ENCODE measurements at regions of chr20 and their contacts with region 1.

Region 1: GRCh38 chr20:58309575-58310290 is at the start of gene RAB22A:
- DNase-seq: peak; percentile 91
- ATAC-seq: peak; percentile 58
- H3K4me3 ChIP-seq: peak within 1 kb of the TSS; percentile 68 to 89 (median 78)
- H3K4me3 Mint-ChIP-seq: peak within 1 kb of the TSS; percentile 91
- H3K27ac ChIP-seq: peak within 1 kb of the TSS; percentile 94 to 97
- H3K27ac Mint-ChIP-seq: peak within 1 kb of the TSS; percentile 96
- H3K4me1 ChIP-seq: peaks cover 47 to 54% of the 10 kb centered on the region in 2 donors
- H3K4me1 Mint-ChIP-seq: peaks cover 54% of the 10 kb centered on the region
- H3K27me3 ChIP-seq: no peaks in the 10 kb centered on the region
- H3K27me3 Mint-ChIP-seq: no peaks in the 10 kb centered on the region
- CTCF ChIP-seq: no peak
- total RNA-seq, gene RAB22A: 21.1 and 22.0 TPM in 2 replicates

Region 2: DNA sequence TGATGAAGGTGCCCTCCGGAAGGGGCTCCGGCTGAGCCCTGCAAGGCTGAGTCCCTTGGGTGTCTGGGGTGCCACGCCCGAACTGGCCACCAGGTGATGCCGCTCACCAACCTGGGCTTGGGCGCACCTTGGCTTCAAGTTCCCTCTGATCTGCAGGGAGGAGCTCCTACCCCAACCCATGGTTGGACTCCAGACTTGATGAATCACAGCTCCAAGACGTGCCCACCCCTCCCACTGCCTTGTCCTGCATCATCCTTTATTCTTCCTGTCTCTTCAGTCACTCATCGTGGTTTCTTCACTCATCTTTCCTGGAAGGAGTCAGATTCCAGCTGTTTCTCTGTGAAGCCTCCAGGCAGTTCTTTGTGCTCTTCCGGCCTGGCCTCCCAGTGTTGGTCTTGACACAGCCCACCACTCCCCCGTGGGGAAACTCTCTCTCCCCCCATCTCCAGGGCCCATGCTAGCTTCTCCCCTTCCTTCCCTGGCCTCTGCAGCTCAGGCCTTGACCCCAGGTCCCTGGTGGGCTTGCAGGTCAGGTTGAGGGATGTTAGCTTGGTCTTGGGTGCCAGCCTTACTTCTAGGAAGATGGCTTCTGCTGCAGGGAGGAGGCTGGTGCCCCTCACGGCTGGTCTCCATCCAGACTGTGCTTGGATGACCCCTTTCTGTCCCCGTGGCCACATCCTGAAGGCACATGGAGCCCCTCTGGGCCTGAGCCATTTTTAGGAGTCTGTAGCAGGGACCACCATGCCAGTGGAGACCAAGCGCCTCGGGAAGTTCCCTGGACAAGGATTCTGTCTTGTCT is 687.0 kb before region 1 on chr20:
- CTCF ChIA-PET with region 1: no interaction called
- POLR2A ChIA-PET with region 1: no interaction called
- intact Hi-C with region 1: loop called (anchors 2 kb)
- DNase-seq: peak; percentile 69
- ATAC-seq: no peak
- H3K4me3 ChIP-seq: no peak overlapping the region
- H3K4me3 Mint-ChIP-seq: peak overlapping the region; percentile 13
- H3K27ac ChIP-seq: no peak overlapping the region
- H3K27ac Mint-ChIP-seq: peak overlapping the region; percentile 80
- H3K4me1 ChIP-seq: peaks cover 54 to 59% of the 10 kb centered on the region in 2 donors
- H3K4me1 Mint-ChIP-seq: peaks cover 65% of the 10 kb centered on the region
- H3K27me3 ChIP-seq: no peaks in the 10 kb centered on the region
- H3K27me3 Mint-ChIP-seq: no peaks in the 10 kb centered on the region
- CTCF ChIP-seq: peak; percentile 82

Region 3: DNA sequence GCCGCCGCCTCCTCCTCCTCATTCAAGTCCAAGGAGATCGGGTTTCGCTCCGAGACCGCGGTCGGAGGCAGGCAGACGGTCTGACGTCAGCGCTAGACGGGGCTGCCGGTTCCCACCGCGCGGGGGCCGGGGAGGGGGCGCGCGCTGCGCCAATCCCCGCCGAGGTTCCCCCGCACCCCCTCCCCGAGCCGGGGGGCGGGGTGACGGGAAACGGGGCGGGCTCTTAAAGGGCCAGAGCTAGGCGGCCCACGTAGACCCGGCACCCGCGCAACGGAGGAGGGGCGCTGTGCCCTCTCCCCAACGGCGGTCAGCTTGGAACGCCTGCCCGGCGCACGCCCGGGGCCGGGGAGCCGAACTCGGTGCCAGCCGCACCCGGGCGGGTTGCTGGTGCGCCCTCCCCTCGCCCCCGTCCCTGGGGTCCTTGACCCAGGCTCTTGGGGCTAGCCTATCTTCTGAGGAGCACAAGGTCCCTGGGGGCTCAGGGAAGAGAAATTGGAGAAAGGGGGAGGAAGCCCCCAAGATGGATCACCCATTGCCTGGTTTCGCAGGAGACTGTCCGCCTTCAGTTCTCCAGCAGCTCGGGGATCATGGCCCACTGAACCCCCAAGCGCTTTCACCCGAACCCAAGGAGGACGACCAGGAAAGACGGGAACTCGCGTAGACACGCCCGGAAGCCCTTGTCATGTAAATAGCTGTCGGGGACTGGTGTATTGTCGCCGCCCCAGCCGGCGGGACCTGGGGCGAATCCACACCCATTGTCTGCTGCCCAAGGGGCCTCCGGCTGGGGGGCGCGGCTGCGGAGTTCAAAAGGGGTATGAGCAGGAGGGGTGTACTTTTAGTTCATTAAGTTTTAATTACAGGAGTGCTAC is 599.6 kb before region 1 on chr20 and contains the start of gene PMEPA1:
- CTCF ChIA-PET with region 1: no interaction called
- POLR2A ChIA-PET with region 1: no interaction called
- intact Hi-C with region 1: loop called (anchors 2 kb)
- DNase-seq: peak; percentile 97
- ATAC-seq: peak; percentile 86
- H3K4me3 ChIP-seq: peak within 1 kb of the TSS; percentile 59 to 96 (median 83)
- H3K4me3 Mint-ChIP-seq: peak within 1 kb of the TSS; percentile 99
- H3K27ac ChIP-seq: peak within 1 kb of the TSS; percentile 80 to 99
- H3K27ac Mint-ChIP-seq: peak within 1 kb of the TSS; percentile 92
- H3K4me1 ChIP-seq: peaks cover 49 to 55% of the 10 kb centered on the region in 2 donors
- H3K4me1 Mint-ChIP-seq: peaks cover 53% of the 10 kb centered on the region
- H3K27me3 ChIP-seq: no peaks in the 10 kb centered on the region
- H3K27me3 Mint-ChIP-seq: no peaks in the 10 kb centered on the region
- CTCF ChIP-seq: no peak
- total RNA-seq, gene PMEPA1: 37.4 and 38.7 TPM in 2 replicates

Region 4: DNA sequence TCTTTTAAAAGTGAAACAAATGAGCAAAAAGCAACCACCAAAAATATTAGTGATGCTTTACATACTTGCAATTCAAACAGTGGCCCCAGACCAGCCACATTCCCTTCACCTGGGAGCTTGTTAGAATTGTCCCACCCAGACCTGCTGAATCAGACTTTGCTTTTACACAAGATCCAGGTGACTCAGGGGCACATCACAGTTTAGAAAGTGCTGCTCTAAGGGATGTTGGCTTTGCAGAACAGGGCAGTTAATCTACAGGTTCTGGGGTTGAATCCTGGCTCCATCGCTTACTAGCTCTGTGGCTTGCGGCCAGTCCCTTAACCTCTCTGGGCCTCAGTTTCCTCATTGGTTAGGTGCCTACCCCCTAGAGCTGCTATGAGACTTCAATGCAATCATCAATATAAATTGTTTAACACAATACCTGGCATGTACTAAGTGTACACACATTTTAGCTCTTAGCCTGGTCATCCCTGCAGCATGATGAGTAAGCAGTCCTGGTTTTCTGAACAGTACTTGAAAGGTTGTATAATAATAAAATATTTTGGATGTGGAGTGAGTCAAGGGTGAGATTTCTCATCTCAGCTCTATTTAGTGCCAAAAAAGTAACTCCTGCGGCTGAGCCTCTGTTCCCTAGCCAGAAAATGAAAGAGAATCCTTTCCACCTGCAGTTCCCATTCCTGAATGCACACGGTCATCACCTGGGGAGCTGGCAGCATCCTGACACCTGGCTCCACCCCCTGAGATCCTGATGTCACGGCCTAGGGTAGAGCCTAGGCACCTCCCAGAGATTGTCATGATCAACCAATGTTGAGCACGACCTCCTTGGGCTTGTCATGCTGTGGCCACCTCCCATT is 244.0 kb before region 1 on chr20:
- CTCF ChIA-PET with region 1: no interaction called
- POLR2A ChIA-PET with region 1: no interaction called
- intact Hi-C with region 1: no loop called
- DNase-seq: no peak
- ATAC-seq: no peak
- H3K4me3 ChIP-seq: no peak overlapping the region
- H3K4me3 Mint-ChIP-seq: no peak overlapping the region
- H3K27ac ChIP-seq: no peak overlapping the region
- H3K27ac Mint-ChIP-seq: no peak overlapping the region
- H3K4me1 ChIP-seq: no peaks in the 10 kb centered on the region
- H3K4me1 Mint-ChIP-seq: no peaks in the 10 kb centered on the region
- H3K27me3 ChIP-seq: no peaks in the 10 kb centered on the region
- H3K27me3 Mint-ChIP-seq: peaks cover 13% of the 10 kb centered on the region
- CTCF ChIP-seq: no peak

Region 5: GRCh38 chr20:58293453-58293852 is 16.3 kb before region 1 on chr20:
- CTCF ChIA-PET with region 1: no interaction called
- POLR2A ChIA-PET with region 1: interaction called, 12 read pairs
- intact Hi-C with region 1: no loop called
- DNase-seq: no peak
- ATAC-seq: no peak
- H3K4me3 ChIP-seq: no peak overlapping the region
- H3K4me3 Mint-ChIP-seq: no peak overlapping the region
- H3K27ac ChIP-seq: no peak overlapping the region
- H3K27ac Mint-ChIP-seq: no peak overlapping the region
- H3K4me1 ChIP-seq: no peaks in the 10 kb centered on the region
- H3K4me1 Mint-ChIP-seq: peaks cover 29% of the 10 kb centered on the region
- H3K27me3 ChIP-seq: no peaks in the 10 kb centered on the region
- H3K27me3 Mint-ChIP-seq: no peaks in the 10 kb centered on the region
- CTCF ChIP-seq: no peak

Region 6: DNA sequence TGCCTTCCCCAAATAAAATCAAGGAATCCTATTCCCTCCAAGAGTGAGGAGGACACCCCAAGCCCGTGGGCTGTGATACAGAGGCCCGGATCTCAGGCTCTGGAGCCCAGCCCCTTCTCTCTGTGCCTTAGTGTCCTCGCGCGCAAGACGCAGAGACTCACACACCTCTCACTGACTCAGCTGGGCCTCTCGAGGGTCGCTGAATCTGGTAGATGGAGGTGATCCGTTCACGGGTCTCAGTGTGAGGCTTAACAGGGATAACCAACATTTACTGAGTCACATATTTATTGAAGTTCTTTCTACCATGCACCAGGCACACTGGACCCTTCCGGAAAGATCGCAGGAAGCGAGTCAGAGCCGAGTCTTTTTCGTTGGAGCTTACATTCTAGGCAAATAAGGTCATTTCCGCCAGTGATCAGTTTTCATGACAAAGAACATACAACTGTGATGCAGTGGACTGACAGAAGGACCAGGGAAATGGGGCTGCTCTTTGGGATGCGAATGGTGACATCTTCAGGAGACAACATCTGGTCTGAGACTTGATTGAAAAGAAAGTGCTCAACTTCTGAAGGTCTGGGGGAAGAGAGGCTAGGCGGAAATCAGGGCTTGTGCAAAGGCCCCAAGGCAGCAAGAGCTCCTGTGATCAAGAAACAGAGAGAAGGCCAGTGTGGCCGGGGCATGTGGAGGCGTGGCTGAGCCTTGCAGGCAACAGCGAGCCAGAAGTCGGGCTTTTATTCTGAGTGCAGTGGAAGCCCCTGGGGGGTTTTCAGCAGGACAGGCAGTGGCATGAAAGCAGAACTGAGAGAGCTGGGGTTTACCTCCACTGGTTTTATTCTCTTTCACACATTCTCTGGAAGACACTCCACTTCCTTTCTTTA is 148.7 kb after region 1 on chr20:
- CTCF ChIA-PET with region 1: no interaction called
- POLR2A ChIA-PET with region 1: interaction called, 4 read pairs
- intact Hi-C with region 1: loop called (anchors 5 kb)
- DNase-seq: peak; percentile 73
- ATAC-seq: peak; percentile 96
- H3K4me3 ChIP-seq: peak overlapping the region in 1 of 5 experiments; percentile 0
- H3K4me3 Mint-ChIP-seq: peak overlapping the region; percentile 73
- H3K27ac ChIP-seq: no peak overlapping the region
- H3K27ac Mint-ChIP-seq: peak overlapping the region; percentile 54
- H3K4me1 ChIP-seq: peaks cover 20 to 21% of the 10 kb centered on the region in 2 donors
- H3K4me1 Mint-ChIP-seq: peaks cover 28% of the 10 kb centered on the region
- H3K27me3 ChIP-seq: peaks cover 0 to 7% (median 2%) of the 10 kb centered on the region in 4 experiments
- H3K27me3 Mint-ChIP-seq: no peaks in the 10 kb centered on the region
- CTCF ChIP-seq: no peak

Region 7: GRCh38 chr20:58888521-58889333 is 579.0 kb after region 1 on chr20:
- CTCF ChIA-PET with region 1: no interaction called
- POLR2A ChIA-PET with region 1: no interaction called
- intact Hi-C with region 1: loop called (anchors 5 kb)
- DNase-seq: peak; percentile 93
- ATAC-seq: peak; percentile 42
- H3K4me3 ChIP-seq: peak overlapping the region; percentile 26 to 90 (median 71)
- H3K4me3 Mint-ChIP-seq: peak overlapping the region; percentile 85
- H3K27ac ChIP-seq: peak overlapping the region; percentile 64 to 88
- H3K27ac Mint-ChIP-seq: peak overlapping the region; percentile 88
- H3K4me1 ChIP-seq: peaks cover 25 to 30% of the 10 kb centered on the region in 2 donors
- H3K4me1 Mint-ChIP-seq: peaks cover 29% of the 10 kb centered on the region
- H3K27me3 ChIP-seq: no peaks in the 10 kb centered on the region
- H3K27me3 Mint-ChIP-seq: no peaks in the 10 kb centered on the region
- CTCF ChIP-seq: no peak

Region 8: DNA sequence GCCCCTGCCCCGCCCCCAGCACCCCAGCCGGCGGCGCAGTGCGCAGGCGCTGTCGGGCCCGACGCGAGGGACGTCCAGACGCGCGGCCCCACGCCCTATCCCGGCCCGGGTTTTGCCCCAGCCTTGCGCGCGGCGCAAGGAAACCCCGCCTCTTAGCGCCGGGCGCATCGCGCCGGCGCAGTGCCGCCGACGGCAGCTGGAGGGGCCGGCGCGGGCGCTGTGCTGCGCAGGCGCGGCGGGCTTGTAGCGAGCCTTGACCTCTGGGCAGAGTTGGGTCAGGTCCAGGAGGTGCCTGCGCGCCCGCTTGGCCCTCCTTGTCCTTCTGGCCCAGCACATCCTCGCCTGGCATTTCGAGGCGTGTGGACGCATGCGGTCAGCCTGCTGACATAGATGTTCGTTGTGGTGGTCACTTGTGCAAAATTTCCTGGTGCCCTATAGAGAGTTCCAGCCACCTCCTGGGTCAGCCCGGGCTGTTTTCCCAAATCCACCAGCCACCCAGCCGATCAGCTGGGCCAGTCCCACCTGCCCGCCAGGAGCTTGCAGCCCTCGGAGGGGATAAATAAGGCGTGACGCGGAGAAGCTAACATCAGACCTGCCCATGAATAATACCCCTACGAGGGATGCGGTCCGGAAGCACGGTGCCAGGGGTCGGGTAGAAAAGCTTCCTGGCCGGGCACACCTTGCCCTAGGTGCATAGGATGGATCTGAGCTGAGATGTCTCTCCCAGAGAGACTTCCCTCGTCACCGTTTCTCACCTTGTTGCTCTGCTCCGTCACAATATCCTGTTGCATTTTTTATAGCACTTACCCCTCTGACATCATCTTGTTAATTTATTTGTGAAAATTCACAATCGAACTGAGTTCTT is 733.3 kb after region 1 on chr20:
- CTCF ChIA-PET with region 1: no interaction called
- POLR2A ChIA-PET with region 1: no interaction called
- intact Hi-C with region 1: loop called (anchors 5 kb)
- DNase-seq: peak; percentile 96
- ATAC-seq: peak; percentile 98
- H3K4me3 ChIP-seq: peak overlapping the region in 4 of 5 experiments; percentile 80 to 97 (median 86)
- H3K4me3 Mint-ChIP-seq: peak overlapping the region; percentile 94
- H3K27ac ChIP-seq: peak overlapping the region; percentile 69 to 89
- H3K27ac Mint-ChIP-seq: peak overlapping the region; percentile 93
- H3K4me1 ChIP-seq: peaks cover 45 to 47% of the 10 kb centered on the region in 2 donors
- H3K4me1 Mint-ChIP-seq: peaks cover 51% of the 10 kb centered on the region
- H3K27me3 ChIP-seq: no peaks in the 10 kb centered on the region
- H3K27me3 Mint-ChIP-seq: no peaks in the 10 kb centered on the region
- CTCF ChIP-seq: no peak